ENCODE measurements at regions of chr4 and their contacts with region 1.

Region 1: DNA sequence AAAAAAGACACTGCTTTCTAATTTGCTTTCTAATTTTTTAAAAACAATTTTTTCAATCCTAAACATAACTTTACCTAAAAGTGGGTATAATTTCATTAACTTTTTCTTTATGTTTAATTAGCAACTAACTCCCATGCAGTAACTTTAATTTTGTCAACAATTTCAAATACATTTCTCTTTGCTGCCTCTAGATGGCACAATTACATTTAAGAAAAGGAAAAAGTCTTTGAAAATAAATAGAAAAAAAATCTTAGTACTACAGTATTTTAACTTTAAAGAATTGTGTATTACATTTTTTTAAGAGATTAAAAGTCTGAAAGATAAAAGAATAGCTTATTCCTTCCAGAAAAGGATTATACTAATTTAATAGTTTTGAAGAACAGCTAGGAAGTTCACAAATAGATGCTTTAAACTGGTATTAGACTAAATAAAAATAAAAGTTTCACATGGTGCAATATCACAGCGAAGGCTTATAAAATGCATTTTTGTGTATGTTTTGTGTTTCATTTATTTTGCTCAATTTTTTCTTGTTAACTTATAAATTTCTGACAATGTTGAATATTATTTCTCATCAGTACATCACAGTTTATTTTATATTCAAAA is 105.1 kb downstream of the ADGRA3 start:
- DNase-seq: no peak
- H3K4me3 ChIP-seq: no peak overlapping the region
- H3K4me3 Mint-ChIP-seq: no peak overlapping the region
- H3K27ac Mint-ChIP-seq: no peak overlapping the region
- H3K4me1 ChIP-seq: no peaks in the 10 kb centered on the region
- H3K4me1 Mint-ChIP-seq: no peaks in the 10 kb centered on the region
- H3K27me3 ChIP-seq: no peaks in the 10 kb centered on the region
- H3K27me3 Mint-ChIP-seq: no peaks in the 10 kb centered on the region
- CTCF ChIP-seq: peak; percentile 33 to 34

Region 2: DNA sequence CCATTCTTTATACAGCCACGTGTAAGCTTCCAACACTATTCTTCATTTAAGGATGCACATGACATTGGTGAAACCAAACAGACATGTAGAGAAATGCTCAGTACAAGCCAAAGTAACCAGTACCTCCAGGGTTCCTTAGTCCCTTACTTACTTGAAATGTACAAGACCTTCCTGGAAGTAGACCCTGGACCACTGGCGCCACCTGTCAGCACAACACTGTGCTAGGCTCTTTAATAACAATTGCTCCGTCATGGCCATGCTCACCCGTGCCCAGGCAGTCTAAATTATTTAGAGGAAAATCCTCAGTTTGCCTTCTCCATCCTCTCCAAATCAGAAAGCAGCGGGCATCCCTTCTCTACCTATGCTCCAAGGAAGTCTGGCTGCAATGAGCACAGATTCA is 52.4 kb after region 1 on chr4:
- CTCF ChIA-PET with region 1: no interaction called
- POLR2A ChIA-PET with region 1: no interaction called
- intact Hi-C with region 1: loop called (anchors 2 kb)
- DNase-seq: peak in 1 of 2 experiments; percentile 35
- H3K4me3 ChIP-seq: no peak overlapping the region
- H3K4me3 Mint-ChIP-seq: no peak overlapping the region
- H3K27ac Mint-ChIP-seq: no peak overlapping the region
- H3K4me1 ChIP-seq: peaks cover 34% of the 10 kb centered on the region
- H3K4me1 Mint-ChIP-seq: peaks cover 40% of the 10 kb centered on the region
- H3K27me3 ChIP-seq: no peaks in the 10 kb centered on the region
- H3K27me3 Mint-ChIP-seq: no peaks in the 10 kb centered on the region
- CTCF ChIP-seq: no peak

Region 3: GRCh38 chr4:22607382-22607781 is 196.6 kb after region 1 on chr4:
- CTCF ChIA-PET with region 1: interaction called, 6 read pairs
- POLR2A ChIA-PET with region 1: no interaction called
- intact Hi-C with region 1: loop called (anchors 1 kb)
- DNase-seq: peak; percentile 51 to 57
- H3K4me3 ChIP-seq: no peak overlapping the region
- H3K4me3 Mint-ChIP-seq: no peak overlapping the region
- H3K27ac Mint-ChIP-seq: no peak overlapping the region
- H3K4me1 ChIP-seq: no peaks in the 10 kb centered on the region
- H3K4me1 Mint-ChIP-seq: no peaks in the 10 kb centered on the region
- H3K27me3 ChIP-seq: no peaks in the 10 kb centered on the region
- H3K27me3 Mint-ChIP-seq: peaks cover 6% of the 10 kb centered on the region
- CTCF ChIP-seq: peak; percentile 45 to 78

Region 4: DNA sequence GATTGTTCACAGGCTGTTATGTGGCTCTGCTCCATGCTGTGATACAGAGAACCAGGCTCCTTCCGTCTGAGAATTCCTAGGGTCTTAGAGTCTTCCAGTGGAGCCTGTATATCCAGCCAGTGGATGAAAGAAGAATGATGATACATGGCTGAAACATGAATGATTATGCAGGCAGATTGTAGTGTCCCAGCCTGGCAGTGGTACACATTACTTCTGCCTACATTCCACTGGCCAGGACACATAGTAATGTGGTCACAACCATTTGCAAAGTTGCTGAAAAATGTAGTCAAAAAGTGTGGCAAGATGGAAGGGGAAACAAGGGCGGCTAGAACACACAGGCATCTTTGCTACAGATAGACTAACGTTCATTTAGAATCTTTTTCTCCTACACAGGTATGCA is 277.5 kb after region 1 on chr4:
- CTCF ChIA-PET with region 1: interaction called, 3 read pairs
- POLR2A ChIA-PET with region 1: no interaction called
- intact Hi-C with region 1: loop called (anchors 1 kb)
- DNase-seq: no peak
- H3K4me3 ChIP-seq: no peak overlapping the region
- H3K4me3 Mint-ChIP-seq: no peak overlapping the region
- H3K27ac Mint-ChIP-seq: no peak overlapping the region
- H3K4me1 ChIP-seq: no peaks in the 10 kb centered on the region
- H3K4me1 Mint-ChIP-seq: peaks cover 27% of the 10 kb centered on the region
- H3K27me3 ChIP-seq: no peaks in the 10 kb centered on the region
- H3K27me3 Mint-ChIP-seq: no peaks in the 10 kb centered on the region
- CTCF ChIP-seq: no peak